Heart right ventricle (tissue), 16 donors: ENCODE measurements at regions of chr12 and their contacts with region 1.

Region 1: GRCh38 chr12:21989819-21990412 is 48.7 kb upstream of the ABCC9 start:
- DNase-seq: no peak
- ATAC-seq: no peak
- H3K4me3 ChIP-seq: no peak overlapping the region
- H3K27ac ChIP-seq: peak overlapping the region in 1 of 10 donors; percentile 13
- H3K4me1 ChIP-seq: peaks cover 0 to 6% (median 0%) of the 10 kb centered on the region in 9 donors
- H3K27me3 ChIP-seq: no peaks in the 10 kb centered on the region
- CTCF ChIP-seq: peak; percentile 46 to 72 (median 56)

Region 2: DNA sequence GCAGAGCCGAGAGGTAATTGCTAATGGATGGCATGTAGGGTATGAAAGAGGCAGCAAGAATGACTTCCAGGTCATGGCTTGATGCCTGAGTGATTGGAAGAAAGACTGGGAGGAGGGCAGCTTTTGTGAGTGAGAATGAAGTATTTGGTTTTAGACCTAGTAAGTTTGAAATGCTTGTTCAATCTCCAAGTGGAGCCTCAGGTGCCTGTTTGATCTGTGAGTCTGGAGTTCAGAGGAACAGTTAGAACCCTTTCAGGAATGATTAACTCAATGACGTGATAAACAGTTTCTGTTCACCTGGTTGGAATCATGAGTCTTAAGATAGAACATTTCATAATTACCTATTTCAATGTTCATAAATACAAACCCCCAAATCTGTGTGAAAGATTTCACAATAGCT is 225.9 kb before region 1 on chr12:
- intact Hi-C with region 1: loop called in 3 of 10 experiments (anchors 10 kb)
- DNase-seq: no peak
- ATAC-seq: no peak
- H3K4me3 ChIP-seq: no peak overlapping the region
- H3K27ac ChIP-seq: peak overlapping the region in 1 of 10 donors; percentile 33
- H3K4me1 ChIP-seq: peaks cover 0 to 15% (median 0%) of the 10 kb centered on the region in 9 donors
- H3K27me3 ChIP-seq: no peaks in the 10 kb centered on the region
- CTCF ChIP-seq: no peak

Region 3: GRCh38 chr12:21934173-21934572 is 55.7 kb before region 1 on chr12:
- intact Hi-C with region 1: no loop called
- DNase-seq: no peak
- ATAC-seq: no peak
- H3K4me3 ChIP-seq: no peak overlapping the region
- H3K27ac ChIP-seq: no peak overlapping the region
- H3K4me1 ChIP-seq: peaks cover 0 to 18% (median 4%) of the 10 kb centered on the region in 9 donors
- H3K27me3 ChIP-seq: peaks cover 0 to 4% (median 0%) of the 10 kb centered on the region in 7 donors
- CTCF ChIP-seq: no peak

Region 4: DNA sequence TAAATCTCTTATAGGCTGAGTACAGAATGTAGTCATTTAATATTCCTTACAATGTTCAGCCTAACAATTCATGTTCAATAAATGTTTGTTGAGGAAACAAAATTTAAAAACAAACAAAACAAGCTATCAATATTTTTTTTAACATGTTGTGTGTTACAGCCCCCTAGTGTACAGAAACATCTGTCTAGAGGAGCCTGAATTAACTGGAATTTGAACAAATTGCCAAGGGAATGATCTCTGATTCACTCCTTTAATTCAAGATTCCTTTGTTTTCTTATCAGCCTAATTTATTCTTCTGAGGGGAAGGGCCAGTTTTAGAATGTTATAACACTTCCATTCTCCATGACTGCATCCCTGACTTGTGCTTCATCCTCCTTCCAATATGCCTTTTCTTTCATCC is 183.3 kb after region 1 on chr12:
- intact Hi-C with region 1: no loop called
- DNase-seq: no peak
- ATAC-seq: no peak
- H3K4me3 ChIP-seq: no peak overlapping the region
- H3K27ac ChIP-seq: no peak overlapping the region
- H3K4me1 ChIP-seq: no peaks in the 10 kb centered on the region
- H3K27me3 ChIP-seq: no peaks in the 10 kb centered on the region
- CTCF ChIP-seq: peak in 1 of 9 donors; percentile 12

Region 5: GRCh38 chr12:22350886-22351285 is 361.0 kb after region 1 on chr12:
- intact Hi-C with region 1: no loop called
- DNase-seq: no peak
- ATAC-seq: no peak
- H3K4me3 ChIP-seq: no peak overlapping the region
- H3K27ac ChIP-seq: no peak overlapping the region
- H3K4me1 ChIP-seq: no peaks in the 10 kb centered on the region
- H3K27me3 ChIP-seq: no peaks in the 10 kb centered on the region
- CTCF ChIP-seq: no peak